Endothelial cell of umbilical vein (primary cell): ENCODE measurements at regions of chr20 and their contacts with region 1.

Region 1: GRCh38 chr20:44683263-44684046 is 31.7 kb upstream of the CCN5 start:
- DNase-seq: peak; percentile 64
- H3K4me3 ChIP-seq: no peak overlapping the region
- H3K27ac ChIP-seq: no peak overlapping the region
- H3K4me1 ChIP-seq: no peaks in the 10 kb centered on the region
- H3K27me3 ChIP-seq: no peaks in the 10 kb centered on the region
- CTCF ChIP-seq: peak; percentile 67 to 75
- POLR2A ChIP-seq: no peak

Region 2: GRCh38 chr20:44382641-44383040 is 300.8 kb before region 1 on chr20:
- CTCF ChIA-PET with region 1: interaction called, 27 read pairs
- POLR2A ChIA-PET with region 1: no interaction called
- dilution Hi-C with region 1: no loop called
- intact Hi-C with region 1: no loop called
- DNase-seq: no peak
- H3K4me3 ChIP-seq: no peak overlapping the region
- H3K27ac ChIP-seq: no peak overlapping the region
- H3K4me1 ChIP-seq: no peaks in the 10 kb centered on the region
- H3K27me3 ChIP-seq: no peaks in the 10 kb centered on the region
- CTCF ChIP-seq: no peak
- POLR2A ChIP-seq: no peak

Region 3: DNA sequence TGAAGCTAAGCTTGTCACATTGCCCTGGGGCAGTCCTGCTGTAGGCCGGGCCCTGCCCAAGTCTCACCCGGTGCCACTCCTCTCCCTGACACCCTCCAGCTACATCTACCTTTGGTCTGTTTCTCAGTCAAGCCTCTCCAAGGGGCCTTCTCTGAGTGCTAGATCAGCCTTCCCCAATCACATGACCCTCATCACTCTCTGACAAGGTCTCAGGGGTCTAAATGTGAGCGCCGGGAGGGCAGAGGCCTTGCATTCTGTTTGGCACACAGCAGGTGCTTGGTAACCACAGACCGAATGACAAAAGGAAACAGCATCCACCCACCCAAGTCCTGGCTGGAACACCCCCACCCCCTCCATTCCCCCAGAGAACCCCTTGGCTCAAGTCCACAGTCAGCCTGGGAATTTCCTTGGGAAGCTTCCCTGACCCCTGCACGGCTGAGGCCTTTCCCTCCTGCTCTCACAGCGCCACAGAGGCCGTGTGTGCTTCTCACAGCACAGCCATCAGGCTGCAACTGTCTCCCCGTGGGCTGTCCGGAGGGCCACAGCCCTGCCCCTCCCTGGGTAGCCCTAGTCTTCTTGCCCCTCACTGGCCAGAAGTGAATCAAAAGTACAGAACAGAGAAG is 68.2 kb before region 1 on chr20:
- CTCF ChIA-PET with region 1: interaction called, 12 read pairs
- POLR2A ChIA-PET with region 1: no interaction called
- dilution Hi-C with region 1: no loop called
- intact Hi-C with region 1: loop called (anchors 2 kb)
- DNase-seq: peak; percentile 67
- H3K4me3 ChIP-seq: no peak overlapping the region
- H3K27ac ChIP-seq: no peak overlapping the region
- H3K4me1 ChIP-seq: no peaks in the 10 kb centered on the region
- H3K27me3 ChIP-seq: no peaks in the 10 kb centered on the region
- CTCF ChIP-seq: no peak
- POLR2A ChIP-seq: no peak

Region 4: GRCh38 chr20:44651684-44652423 is 31.6 kb before region 1 on chr20 and contains the start of gene ADA:
- CTCF ChIA-PET with region 1: interaction called, 39 read pairs
- POLR2A ChIA-PET with region 1: interaction called, 3 read pairs
- dilution Hi-C with region 1: no loop called
- intact Hi-C with region 1: loop called (anchors 2 kb)
- DNase-seq: peak; percentile 71
- H3K4me3 ChIP-seq: peak within 1 kb of the TSS; percentile 48 to 88 (median 51)
- H3K27ac ChIP-seq: no peak within 1 kb of the TSS
- H3K4me1 ChIP-seq: peaks cover 8% of the 10 kb centered on the region
- H3K27me3 ChIP-seq: peaks cover 16 to 19% of the 10 kb centered on the region in 2 experiments
- CTCF ChIP-seq: no peak
- POLR2A ChIP-seq: no peak
- total RNA-seq, gene ADA: 26.3 and 33.2 TPM in 2 replicates

Region 5: GRCh38 chr20:44733341-44734069 is 50.0 kb after region 1 on chr20:
- CTCF ChIA-PET with region 1: interaction called, 310 read pairs
- POLR2A ChIA-PET with region 1: no interaction called
- dilution Hi-C with region 1: no loop called
- intact Hi-C with region 1: loop called (anchors 1 kb)
- DNase-seq: peak; percentile 74
- H3K4me3 ChIP-seq: no peak overlapping the region
- H3K27ac ChIP-seq: no peak overlapping the region
- H3K4me1 ChIP-seq: peaks cover 12% of the 10 kb centered on the region
- H3K27me3 ChIP-seq: no peaks in the 10 kb centered on the region
- CTCF ChIP-seq: peak; percentile 84 to 92
- POLR2A ChIP-seq: no peak

Region 6: DNA sequence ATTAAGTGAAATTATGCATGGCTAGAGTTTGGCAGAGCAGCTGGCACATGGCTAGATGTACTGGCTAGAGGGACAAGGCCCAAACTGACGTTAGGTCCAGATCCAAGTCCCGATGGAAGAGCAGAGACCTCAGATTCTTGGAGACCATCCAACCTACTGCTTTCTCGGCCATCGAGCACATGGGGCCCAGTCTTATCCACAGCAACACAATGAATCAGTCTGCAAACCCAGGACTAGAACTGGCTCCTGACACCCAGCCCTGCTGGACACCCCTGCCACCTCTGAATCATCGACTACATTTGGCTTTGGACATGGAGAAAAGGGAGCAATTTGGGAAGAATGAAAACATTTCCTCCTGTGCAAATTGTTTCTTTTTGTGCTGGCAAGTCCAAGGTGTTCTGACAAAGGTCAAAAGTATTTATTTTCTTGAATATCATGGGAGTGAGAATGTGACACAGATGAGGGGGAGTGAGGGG is 178.1 kb after region 1 on chr20:
- CTCF ChIA-PET with region 1: interaction called, 17 read pairs
- POLR2A ChIA-PET with region 1: no interaction called
- dilution Hi-C with region 1: no loop called
- intact Hi-C with region 1: no loop called
- DNase-seq: peak; percentile 17
- H3K4me3 ChIP-seq: no peak overlapping the region
- H3K27ac ChIP-seq: no peak overlapping the region
- H3K4me1 ChIP-seq: no peaks in the 10 kb centered on the region
- H3K27me3 ChIP-seq: peaks cover 2 to 4% of the 10 kb centered on the region in 2 experiments
- CTCF ChIP-seq: no peak
- POLR2A ChIP-seq: no peak